Right ventricle myocardium inferior (tissue), 1 donor: ENCODE measurements at regions of chr5 and their contacts with region 1.

Region 1: DNA sequence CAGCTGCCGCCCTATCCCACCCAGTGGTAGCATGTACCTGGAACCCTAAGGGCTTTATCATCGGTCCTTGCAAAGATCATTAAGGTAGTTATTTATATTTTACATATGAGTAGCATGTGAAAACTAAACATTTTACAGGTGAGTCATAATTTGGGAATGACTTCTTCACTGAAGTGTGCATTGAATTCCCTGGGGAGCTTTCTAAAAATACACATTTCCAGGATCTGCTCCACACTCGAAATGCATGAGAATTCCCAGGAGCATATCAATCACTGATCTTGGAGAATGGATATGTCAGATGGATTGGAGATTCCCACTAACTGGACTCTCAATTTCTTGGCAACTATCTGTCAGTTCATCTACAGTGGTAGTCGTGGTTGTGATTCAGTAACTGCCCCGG is 717.5 kb downstream of the IRX1 start:
- DNase-seq: no peak
- ATAC-seq: no peak

Region 2: GRCh38 chr5:2326601-2327000 is 1986.5 kb before region 1 on chr5:
- intact Hi-C with region 1: loop called (anchors 10 kb)
- DNase-seq: no peak
- ATAC-seq: no peak